ENCODE measurements at regions of chr22 and their contacts with region 1.

Region 1: DNA sequence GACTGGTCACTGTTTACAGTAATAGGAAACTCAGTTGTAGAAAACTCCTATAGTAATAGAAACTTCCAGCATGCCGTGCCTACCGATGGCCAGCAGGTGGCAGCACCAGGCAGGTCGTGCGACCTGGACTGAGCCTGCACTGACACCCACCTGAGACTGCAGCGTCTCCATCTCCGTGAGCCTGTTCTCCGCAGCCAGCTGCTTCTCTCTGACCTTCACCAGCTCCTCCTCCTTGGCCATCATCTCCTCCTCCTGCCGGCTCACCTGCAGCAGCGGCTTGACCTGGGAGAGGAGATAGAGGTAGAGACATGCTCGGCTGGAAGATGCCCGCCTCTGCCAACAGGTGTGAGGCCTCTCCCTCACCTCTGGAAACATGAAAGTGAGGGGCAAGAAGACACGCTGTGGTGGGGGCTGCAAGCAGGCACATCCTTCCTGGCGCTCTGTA is 48.5 kb downstream of the APOL1 start:
- DNase-seq: peak; percentile 94
- H3K4me3 Mint-ChIP-seq: no peak overlapping the region
- H3K27ac Mint-ChIP-seq: peak overlapping the region; percentile 34
- H3K4me1 Mint-ChIP-seq: peaks cover 8% of the 10 kb centered on the region
- H3K27me3 Mint-ChIP-seq: no peaks in the 10 kb centered on the region

Region 2: DNA sequence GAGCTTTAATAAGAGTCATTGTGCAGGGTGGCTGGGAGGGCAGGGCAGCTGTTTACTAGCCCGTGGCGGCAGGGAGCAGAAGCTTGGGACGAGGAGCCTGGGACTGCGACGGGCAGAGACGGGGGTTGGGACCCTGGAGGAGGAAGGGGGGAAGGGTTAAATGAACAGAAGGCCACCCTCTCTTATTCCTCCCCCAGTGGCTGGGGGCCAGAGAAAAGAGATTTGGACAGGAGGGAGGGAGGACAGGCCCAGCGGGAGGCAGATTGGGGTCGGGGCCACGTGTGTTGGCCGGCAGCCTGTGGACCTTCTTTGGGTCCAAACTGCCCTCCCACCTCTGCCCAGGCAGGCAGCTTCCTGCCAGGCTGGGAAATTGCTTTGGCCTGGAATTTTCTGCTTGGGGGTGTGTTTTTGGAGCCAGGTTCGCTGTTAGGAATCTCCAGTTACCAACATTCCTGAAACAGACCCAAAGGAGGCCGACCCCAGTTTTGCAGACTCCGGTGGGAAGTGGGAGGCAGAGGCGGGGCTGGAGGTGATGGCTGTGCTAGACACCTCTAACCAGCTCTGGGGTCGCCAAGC is 191.0 kb before region 1 on chr22:
- intact Hi-C with region 1: no loop called
- DNase-seq: no peak
- H3K4me3 Mint-ChIP-seq: no peak overlapping the region
- H3K27ac Mint-ChIP-seq: no peak overlapping the region
- H3K4me1 Mint-ChIP-seq: peaks cover 2% of the 10 kb centered on the region
- H3K27me3 Mint-ChIP-seq: peaks cover 13% of the 10 kb centered on the region

Region 3: GRCh38 chr22:36470162-36470993 is 169.0 kb after region 1 on chr22:
- intact Hi-C with region 1: loop called (anchors 1 kb)
- DNase-seq: peak; percentile 95
- H3K4me3 Mint-ChIP-seq: peak overlapping the region; percentile 23
- H3K27ac Mint-ChIP-seq: peak overlapping the region; percentile 48
- H3K4me1 Mint-ChIP-seq: peaks cover 22% of the 10 kb centered on the region
- H3K27me3 Mint-ChIP-seq: no peaks in the 10 kb centered on the region

Measured in activated CD4-positive, alpha-beta T cell treated with anti-CD3 and anti-CD28 coated beads, Interleukin-2, amount 10 ng/mL, durations not matched to agents 24 days and 14 days (primary cell).